Cardiac septum (tissue), 1 donor: ENCODE measurements at regions of chr1 and their contacts with region 1.

Region 1: GRCh38 chr1:170214117-170215032 is 68.6 kb downstream of the NTMT2 start:
- DNase-seq: no peak

Region 2: DNA sequence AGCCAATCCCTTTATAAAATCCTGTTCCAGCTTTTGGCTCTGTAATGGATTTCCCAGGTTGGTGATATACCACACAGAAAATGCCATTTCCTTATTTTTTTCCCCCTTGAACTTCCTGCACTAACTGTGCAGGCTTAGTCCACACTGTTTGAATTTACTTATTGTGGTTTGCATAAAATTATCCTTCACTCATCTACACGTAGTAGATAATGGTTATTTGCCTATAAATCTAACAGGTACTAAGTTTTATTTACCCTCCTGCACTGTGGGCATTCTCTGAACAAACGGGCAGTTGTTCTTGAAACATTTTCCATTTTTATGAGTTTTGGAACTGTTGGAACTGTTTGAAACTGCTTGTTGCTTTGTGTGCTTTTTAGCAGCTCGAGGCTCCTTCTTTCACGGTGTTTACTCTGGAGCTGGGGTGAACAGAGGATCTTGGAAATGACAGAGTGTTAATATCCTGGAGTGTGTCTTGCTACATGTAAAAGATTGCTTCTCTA is 116.9 kb before region 1 on chr1:
- intact Hi-C with region 1: no loop called
- DNase-seq: no peak

Region 3: GRCh38 chr1:170351366-170351946 is 137.1 kb after region 1 on chr1:
- intact Hi-C with region 1: loop called (anchors 5 kb)
- DNase-seq: no peak

Region 4: GRCh38 chr1:170410401-170411166 is 196.2 kb after region 1 on chr1:
- intact Hi-C with region 1: loop called (anchors 5 kb)
- DNase-seq: no peak